ENCODE measurements at regions of chr18 and their contacts with region 1.

Region 1: GRCh38 chr18:2079742-2080141 is 491.6 kb downstream of the METTL4 start:
- DNase-seq: no peak
- H3K4me3 ChIP-seq: no peak overlapping the region
- H3K27ac ChIP-seq: no peak overlapping the region
- H3K4me1 ChIP-seq: no peaks in the 10 kb centered on the region
- H3K27me3 ChIP-seq: no peaks in the 10 kb centered on the region
- CTCF ChIP-seq: no peak
- EP300 ChIP-seq: no peak
- POLR2A ChIP-seq: no peak

Region 2: GRCh38 chr18:1585879-1586488 is 493.8 kb before region 1 on chr18:
- in situ Hi-C with region 1: no loop called
- intact Hi-C with region 1: loop called (anchors 5 kb)
- DNase-seq: no peak
- H3K4me3 ChIP-seq: no peak overlapping the region
- H3K27ac ChIP-seq: no peak overlapping the region
- H3K4me1 ChIP-seq: no peaks in the 10 kb centered on the region
- H3K27me3 ChIP-seq: no peaks in the 10 kb centered on the region
- CTCF ChIP-seq: peak in 3 of 5 experiments; percentile 16 to 39 (median 32)
- EP300 ChIP-seq: no peak
- POLR2A ChIP-seq: no peak

Region 3: GRCh38 chr18:1875219-1875618 is 204.5 kb before region 1 on chr18:
- in situ Hi-C with region 1: no loop called
- intact Hi-C with region 1: no loop called
- DNase-seq: no peak
- H3K4me3 ChIP-seq: no peak overlapping the region
- H3K27ac ChIP-seq: no peak overlapping the region
- H3K4me1 ChIP-seq: no peaks in the 10 kb centered on the region
- H3K27me3 ChIP-seq: no peaks in the 10 kb centered on the region
- CTCF ChIP-seq: no peak
- EP300 ChIP-seq: no peak
- POLR2A ChIP-seq: no peak